Breast epithelium (tissue), 4 donors: ENCODE measurements at regions of chr1 and their contacts with region 1.

Region 1: DNA sequence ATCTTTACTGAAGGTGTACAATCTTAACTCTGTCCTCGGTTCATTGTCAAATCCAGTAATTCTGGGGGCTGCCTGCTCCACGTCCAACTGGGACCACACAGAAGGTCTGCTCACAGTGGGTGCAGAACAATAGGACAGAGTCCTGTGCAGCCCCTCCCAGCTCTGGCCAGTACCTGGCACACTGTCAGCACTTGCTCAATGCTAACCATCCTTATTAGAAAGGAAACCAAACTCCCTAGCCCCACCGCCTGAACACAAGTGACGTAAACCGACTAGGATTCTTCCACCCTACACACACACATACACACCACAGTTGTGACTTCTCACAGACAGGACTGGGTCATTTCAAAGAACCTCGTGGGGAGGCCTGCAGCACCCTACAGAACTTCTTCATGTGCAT is 5.2 kb downstream of the BCAR3 start:
- DNase-seq: no peak
- H3K4me3 ChIP-seq: no peak overlapping the region
- H3K27ac ChIP-seq: peak overlapping the region; percentile 22 to 46
- H3K4me1 ChIP-seq: peaks cover 12 to 17% of the 10 kb centered on the region in 2 donors
- H3K27me3 ChIP-seq: no peaks in the 10 kb centered on the region
- CTCF ChIP-seq: no peak
- POLR2A ChIP-seq: no peak

Region 2: DNA sequence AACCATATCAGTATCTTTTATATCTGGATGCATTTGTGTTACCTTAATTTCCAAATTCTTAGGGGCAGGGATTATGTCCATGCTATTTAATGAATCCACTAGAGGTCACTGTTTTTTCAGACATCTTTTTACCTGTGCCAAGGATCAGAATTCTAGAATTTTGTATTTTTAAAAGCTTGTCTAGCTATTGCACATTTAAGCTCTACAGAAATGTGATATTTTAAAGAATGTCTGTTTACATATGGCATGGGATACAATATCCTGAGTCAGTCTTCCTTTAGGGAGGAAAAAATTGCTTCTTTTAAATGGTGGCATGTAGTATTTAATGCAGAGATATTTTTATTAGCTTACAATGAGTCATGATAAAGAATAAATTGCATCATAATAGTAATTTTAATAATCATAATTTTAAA is 1366.2 kb before region 1 on chr1:
- intact Hi-C with region 1: no loop called
- DNase-seq: no peak
- H3K4me3 ChIP-seq: no peak overlapping the region
- H3K27ac ChIP-seq: no peak overlapping the region
- H3K4me1 ChIP-seq: no peaks in the 10 kb centered on the region
- H3K27me3 ChIP-seq: no peaks in the 10 kb centered on the region
- CTCF ChIP-seq: peak in 2 of 3 donors; percentile 16 to 33
- POLR2A ChIP-seq: no peak

Region 3: GRCh38 chr1:93549811-93550210 is 126.6 kb before region 1 on chr1:
- intact Hi-C with region 1: no loop called
- DNase-seq: no peak
- H3K4me3 ChIP-seq: no peak overlapping the region
- H3K27ac ChIP-seq: no peak overlapping the region
- H3K4me1 ChIP-seq: peaks cover 0 to 13% of the 10 kb centered on the region in 2 donors
- H3K27me3 ChIP-seq: no peaks in the 10 kb centered on the region
- CTCF ChIP-seq: no peak
- POLR2A ChIP-seq: no peak

Region 4: DNA sequence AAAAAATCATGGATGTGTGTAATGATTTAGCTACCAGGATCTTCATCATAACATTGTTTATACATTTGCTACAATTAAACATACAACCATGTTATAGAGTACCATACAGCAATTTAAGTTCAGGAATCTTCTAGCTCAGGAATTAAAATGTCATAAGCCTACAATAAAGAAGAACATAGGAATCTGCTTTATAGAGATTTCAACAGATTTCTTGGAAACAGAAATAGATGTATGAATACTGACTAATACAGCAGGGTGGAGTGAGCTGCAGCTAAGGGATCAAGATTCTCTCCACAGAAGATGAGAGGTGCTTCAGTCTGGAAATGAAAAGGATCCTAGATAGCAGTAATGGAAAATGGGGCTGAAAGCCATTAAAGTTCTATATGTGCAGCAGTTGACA is 128.6 kb after region 1 on chr1:
- intact Hi-C with region 1: loop called (anchors 5 kb)
- DNase-seq: no peak
- H3K4me3 ChIP-seq: no peak overlapping the region
- H3K27ac ChIP-seq: no peak overlapping the region
- H3K4me1 ChIP-seq: peaks cover 0 to 6% of the 10 kb centered on the region in 2 donors
- H3K27me3 ChIP-seq: no peaks in the 10 kb centered on the region
- CTCF ChIP-seq: no peak
- POLR2A ChIP-seq: no peak

Region 5: GRCh38 chr1:94514095-94514727 is 837.8 kb after region 1 on chr1:
- intact Hi-C with region 1: no loop called
- DNase-seq: no peak
- H3K4me3 ChIP-seq: no peak overlapping the region
- H3K27ac ChIP-seq: no peak overlapping the region
- H3K4me1 ChIP-seq: no peaks in the 10 kb centered on the region
- H3K27me3 ChIP-seq: no peaks in the 10 kb centered on the region
- CTCF ChIP-seq: peak in 2 of 3 donors; percentile 35 to 41
- POLR2A ChIP-seq: no peak